HCT116 (cell line): ENCODE measurements at regions of chr11 and their contacts with region 1.

Region 1: GRCh38 chr11:35617687-35618496 is at the start of gene FJX1:
- DNase-seq: no peak
- ATAC-seq: peak; percentile 65
- H3K4me3 ChIP-seq: peak within 1 kb of the TSS; percentile 49 to 60
- H3K27ac ChIP-seq: peak within 1 kb of the TSS; percentile 76
- H3K4me1 ChIP-seq: peaks cover 13 to 59% of the 10 kb centered on the region in 2 experiments; a peak in 3 of 4 replicates
- H3K27me3 ChIP-seq: 0 out of 2 replicates have a peak, but pooled peaks cover 4% of the 10 kb centered on the region
- CTCF ChIP-seq: no peak
- POLR2A ChIP-seq: peak; percentile 4
- RAD21 ChIP-seq: no peak
- total RNA-seq, gene FJX1: 13.7 TPM

Region 2: DNA sequence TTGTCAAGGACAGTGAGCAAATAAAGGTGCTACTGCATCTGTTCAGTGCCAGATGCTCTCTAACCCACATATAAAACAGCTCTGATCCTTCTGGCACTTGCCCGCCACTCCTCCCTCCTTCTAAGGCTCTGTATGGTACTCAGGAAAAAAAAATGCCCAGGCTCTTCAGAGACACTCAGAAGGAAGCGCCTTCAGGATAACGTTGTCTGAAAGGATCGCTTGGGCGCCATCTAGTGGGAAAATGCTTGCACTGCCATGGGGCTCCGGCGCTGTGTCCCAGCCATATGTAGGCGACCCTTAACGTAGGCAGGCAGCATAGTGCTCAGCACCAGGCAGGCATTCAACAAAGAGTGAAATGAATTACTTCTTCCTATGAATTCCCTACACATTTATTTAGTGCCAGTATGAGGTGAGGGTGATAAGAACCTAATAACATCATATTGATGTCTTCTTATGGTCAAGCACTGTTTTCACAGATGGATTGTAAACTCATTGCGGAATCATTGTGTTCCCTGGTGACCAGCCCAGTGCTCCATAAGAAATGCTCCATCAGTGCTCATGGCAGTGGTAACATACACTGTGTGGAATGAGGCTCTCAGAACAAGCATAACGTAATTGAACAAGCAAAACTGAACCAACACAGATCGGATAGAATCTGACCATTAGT is 132.1 kb before region 1 on chr11:
- CTCF ChIA-PET with region 1: no interaction called
- POLR2A ChIA-PET with region 1: no interaction called
- RAD21 ChIA-PET with region 1: no interaction called
- intact Hi-C with region 1: loop called (anchors 5 kb)
- DNase-seq: peak; percentile 73
- ATAC-seq: peak; percentile 99
- H3K4me3 ChIP-seq: no peak overlapping the region
- H3K27ac ChIP-seq: no peak overlapping the region
- H3K4me1 ChIP-seq: peaks cover 0 to 4% of the 10 kb centered on the region in 2 experiments; a peak in 1 of 4 replicates
- H3K27me3 ChIP-seq: no peaks in the 10 kb centered on the region
- CTCF ChIP-seq: peak; percentile 71 to 93 (median 92)
- POLR2A ChIP-seq: no peak
- RAD21 ChIP-seq: peak; percentile 71

Region 3: DNA sequence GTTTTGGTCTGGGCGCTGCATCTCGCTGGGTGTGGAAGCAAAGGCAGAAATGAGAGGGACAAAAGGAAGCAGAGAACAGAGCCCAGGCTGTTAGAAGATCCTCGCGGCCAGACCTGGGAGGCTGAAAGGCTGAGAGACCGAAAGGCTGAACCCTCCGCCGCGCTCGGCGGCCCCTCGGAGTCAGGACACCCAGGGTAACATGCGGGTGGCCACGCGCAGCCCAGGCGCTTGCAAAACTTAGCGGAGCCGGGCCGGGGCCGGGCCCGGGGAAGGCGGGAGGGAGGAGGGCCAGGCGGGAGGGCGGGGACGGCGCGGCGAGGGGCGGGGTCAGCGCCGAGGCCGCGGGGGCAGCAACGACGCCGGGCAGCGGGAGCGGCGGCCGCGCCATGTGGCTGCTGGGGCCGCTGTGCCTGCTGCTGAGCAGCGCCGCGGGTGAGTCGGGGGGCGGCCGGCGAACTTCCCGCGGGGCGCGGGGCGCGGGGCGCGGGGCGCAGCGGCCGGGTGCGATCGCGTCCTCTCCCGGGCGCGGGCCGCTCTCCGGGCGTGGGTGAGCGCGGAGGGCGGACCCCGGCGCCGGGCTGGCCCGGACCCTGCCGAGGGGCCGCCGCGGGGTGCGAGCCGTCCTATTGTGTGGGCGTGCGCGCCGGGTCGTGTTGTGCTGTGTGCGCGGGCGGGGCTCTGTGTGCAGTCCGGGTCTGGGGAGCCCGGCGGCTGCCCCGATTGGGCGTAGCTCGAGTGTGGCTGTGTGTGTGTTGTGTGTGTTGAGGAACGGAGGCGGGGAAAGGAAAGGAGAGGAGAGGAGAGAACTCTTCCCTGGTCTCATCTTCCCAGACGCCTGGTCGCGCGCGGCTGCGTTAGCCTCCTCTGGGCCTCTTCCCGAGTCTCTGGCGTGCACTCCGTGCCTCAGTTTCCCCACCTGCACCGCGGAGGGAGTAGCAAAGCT is 326.1 kb after region 1 on chr11 and contains the start of gene LDLRAD3:
- CTCF ChIA-PET with region 1: no interaction called
- POLR2A ChIA-PET with region 1: no interaction called
- RAD21 ChIA-PET with region 1: no interaction called
- intact Hi-C with region 1: loop called (anchors 10 kb)
- DNase-seq: peak; percentile 37
- ATAC-seq: peak; percentile 89
- H3K4me3 ChIP-seq: peak within 1 kb of the TSS; percentile 72 to 76
- H3K27ac ChIP-seq: peak within 1 kb of the TSS; percentile 68
- H3K4me1 ChIP-seq: peaks cover 22 to 35% of the 10 kb centered on the region in 2 experiments
- H3K27me3 ChIP-seq: no peaks in the 10 kb centered on the region
- CTCF ChIP-seq: no peak
- POLR2A ChIP-seq: peak; percentile 76
- RAD21 ChIP-seq: no peak
- total RNA-seq, gene LDLRAD3: 19.0 TPM

Region 4: GRCh38 chr11:36149538-36150242 is 531.8 kb after region 1 on chr11:
- CTCF ChIA-PET with region 1: interaction called, 3 read pairs
- POLR2A ChIA-PET with region 1: no interaction called
- RAD21 ChIA-PET with region 1: interaction called in 1 of 2 experiments, 3 read pairs
- intact Hi-C with region 1: loop called (anchors 1 kb)
- DNase-seq: peak; percentile 99
- ATAC-seq: peak; percentile 93
- H3K4me3 ChIP-seq: peak overlapping the region in 1 of 2 experiments; percentile 33; a peak in 2 of 4 replicates
- H3K27ac ChIP-seq: peak overlapping the region; percentile 81
- H3K4me1 ChIP-seq: peaks cover 22 to 45% of the 10 kb centered on the region in 2 experiments
- H3K27me3 ChIP-seq: no peaks in the 10 kb centered on the region
- CTCF ChIP-seq: peak; percentile 73 to 83 (median 80)
- POLR2A ChIP-seq: no peak
- RAD21 ChIP-seq: peak; percentile 83

Region 5: DNA sequence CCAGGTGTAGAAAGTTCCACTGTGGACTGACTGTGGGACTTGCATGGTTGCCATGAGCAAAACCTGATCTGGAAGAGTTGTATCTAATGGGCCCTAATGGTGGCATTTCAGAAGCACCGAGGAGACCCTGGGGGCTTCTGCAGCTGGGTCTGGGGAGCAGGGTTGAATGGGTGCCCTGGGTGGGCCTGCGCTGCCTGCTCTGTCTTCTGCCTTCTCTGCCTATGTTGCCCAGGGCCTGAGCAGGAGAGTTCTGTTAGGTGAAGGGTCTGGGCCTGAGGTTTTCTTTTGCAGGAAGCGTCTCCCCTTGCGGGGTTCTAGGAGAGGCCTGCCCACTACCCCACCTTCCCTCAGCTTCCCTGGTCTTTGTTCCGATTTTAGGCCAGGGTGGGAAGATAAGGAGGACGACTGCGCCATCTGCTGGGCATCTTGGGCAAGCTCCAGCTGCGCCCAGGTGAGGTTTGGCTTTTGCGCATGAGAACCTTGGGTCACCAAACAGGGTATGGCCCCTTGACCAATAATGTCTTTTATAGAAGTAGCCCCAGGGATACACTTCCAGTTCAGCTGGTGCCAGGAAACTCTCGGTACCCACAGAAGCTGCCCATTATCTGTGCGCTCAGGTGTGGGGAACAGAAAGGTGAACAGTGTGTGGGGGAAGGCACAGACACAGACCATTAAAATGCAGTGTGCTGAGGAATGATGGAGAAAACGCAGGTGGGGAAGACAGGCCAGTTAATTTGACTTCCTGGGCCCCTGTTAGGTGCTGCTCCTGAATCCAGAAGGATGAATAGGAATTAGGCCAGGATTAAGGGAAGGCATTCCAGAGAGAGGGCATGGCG is 648.1 kb after region 1 on chr11:
- CTCF ChIA-PET with region 1: interaction called, 8 read pairs
- POLR2A ChIA-PET with region 1: no interaction called
- RAD21 ChIA-PET with region 1: interaction called in 1 of 2 experiments, 4 read pairs
- intact Hi-C with region 1: loop called (anchors 1 kb)
- DNase-seq: peak; percentile 19
- ATAC-seq: peak; percentile 96
- H3K4me3 ChIP-seq: no peak overlapping the region
- H3K27ac ChIP-seq: no peak overlapping the region
- H3K4me1 ChIP-seq: no peaks in the 10 kb centered on the region
- H3K27me3 ChIP-seq: no peaks in the 10 kb centered on the region
- CTCF ChIP-seq: peak; percentile 79 to 94 (median 82)
- POLR2A ChIP-seq: no peak
- RAD21 ChIP-seq: peak; percentile 94